ENCODE measurements at regions of chr4 and their contacts with region 1.

Region 1: GRCh38 chr4:78775303-78776030 is 683 bp upstream of the BMP2K start:
- DNase-seq: peak; percentile 89 to 94 (median 93)
- ATAC-seq: peak; percentile 87
- H3K4me3 ChIP-seq: peak overlapping the region; percentile 76
- H3K4me1 ChIP-seq: peaks cover 17% of the 10 kb centered on the region
- CTCF ChIP-seq: no peak

Region 2: DNA sequence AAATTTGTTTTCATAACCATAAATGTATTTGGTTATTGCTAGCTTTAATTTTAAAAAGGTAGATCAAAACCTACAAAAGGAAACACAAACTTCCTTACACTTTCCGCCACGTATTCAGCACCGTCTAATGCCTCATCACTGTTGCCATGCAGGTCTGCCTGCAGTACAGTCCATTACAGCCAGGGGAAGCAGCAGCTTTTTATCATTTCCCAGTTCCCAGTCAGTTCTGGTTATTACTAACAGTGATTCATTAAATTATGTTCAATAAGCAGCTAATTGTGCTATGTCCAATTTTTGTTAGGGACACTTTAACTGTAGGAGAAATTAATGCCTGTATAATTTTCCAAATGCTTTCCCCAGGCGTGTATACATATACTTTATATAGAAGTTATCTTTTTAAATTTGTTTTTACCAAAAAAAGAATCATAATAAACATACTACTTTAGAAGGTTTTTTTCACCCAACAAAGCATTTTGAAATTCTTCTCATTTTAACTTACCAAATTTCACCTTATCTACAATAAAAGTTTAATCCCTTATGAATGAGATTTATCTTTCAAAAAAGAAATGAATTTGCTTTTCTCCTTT is 130.6 kb before region 1 on chr4:
- intact Hi-C with region 1: loop called in 1 of 2 experiments (anchors 10 kb)
- DNase-seq: peak in 2 of 3 donors; percentile 51 to 80
- ATAC-seq: peak; percentile 78
- H3K4me3 ChIP-seq: no peak overlapping the region
- H3K4me1 ChIP-seq: peaks cover 20% of the 10 kb centered on the region
- CTCF ChIP-seq: peak; percentile 83

Region 3: GRCh38 chr4:78656968-78657445 is 118.5 kb before region 1 on chr4:
- intact Hi-C with region 1: no loop called
- DNase-seq: no peak
- ATAC-seq: peak; percentile 34
- H3K4me3 ChIP-seq: no peak overlapping the region
- H3K4me1 ChIP-seq: peaks cover 4% of the 10 kb centered on the region
- CTCF ChIP-seq: no peak

Region 4: DNA sequence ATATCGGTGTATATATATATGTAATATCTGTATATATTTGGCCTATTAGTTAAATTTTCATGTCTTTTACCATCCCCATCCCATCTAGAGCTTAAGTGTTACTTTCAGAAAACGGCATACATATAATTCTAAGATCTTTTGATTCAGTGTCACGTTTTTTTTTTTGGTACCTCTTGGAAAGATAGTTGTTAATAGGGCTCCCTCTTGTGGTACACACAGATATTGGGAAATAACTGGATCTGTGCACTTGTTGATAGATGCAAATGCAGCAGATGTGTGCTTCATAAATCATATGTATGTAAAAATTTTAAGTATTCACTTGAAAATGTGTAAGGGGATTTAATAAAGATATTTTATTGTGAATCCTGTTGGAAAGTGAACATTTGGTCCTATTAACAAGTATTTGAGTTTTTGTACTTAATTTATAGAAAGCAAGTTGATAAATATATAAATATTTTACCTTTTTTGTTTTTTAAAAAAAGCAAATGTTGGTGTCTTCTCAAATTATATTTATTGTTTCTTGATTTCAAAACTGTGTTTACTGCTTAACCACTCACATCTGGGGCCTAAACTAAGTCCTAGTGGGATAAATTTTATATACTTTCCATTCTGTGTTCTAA is 89.0 kb after region 1 on chr4:
- intact Hi-C with region 1: loop called in 1 of 2 experiments (anchors 5 kb)
- DNase-seq: peak in 1 of 3 donors; percentile 63
- ATAC-seq: peak; percentile 71
- H3K4me3 ChIP-seq: no peak overlapping the region
- H3K4me1 ChIP-seq: peaks cover 10% of the 10 kb centered on the region
- CTCF ChIP-seq: peak; percentile 57

Measured in mucosa of descending colon (tissue), 3 donors.